Spleen (tissue), 13 donors: ENCODE measurements at regions of chr13 and their contacts with region 1.

Region 1: DNA sequence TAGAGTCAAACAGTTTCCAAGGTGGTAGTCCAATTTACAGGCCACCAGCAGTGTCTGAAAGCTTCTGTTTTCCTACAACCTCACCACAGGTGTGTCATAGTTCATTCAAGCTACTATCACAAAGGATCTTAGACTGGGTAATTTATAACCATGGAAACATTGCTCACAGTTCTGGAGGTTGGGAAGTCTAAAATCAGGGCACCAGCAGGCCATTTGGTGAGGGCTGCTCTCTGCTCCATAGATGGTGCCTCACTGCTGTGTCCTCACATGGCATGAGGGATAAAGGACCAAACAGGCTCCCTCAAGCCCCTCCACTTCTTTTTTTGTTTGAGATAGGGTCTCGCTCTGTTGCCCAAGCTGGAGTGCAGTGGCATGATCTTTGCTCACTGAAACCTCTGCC is 60.6 kb downstream of the ING1 start:
- DNase-seq: no peak
- H3K4me3 ChIP-seq: no peak overlapping the region
- H3K27ac ChIP-seq: no peak overlapping the region
- H3K4me1 ChIP-seq: peaks cover 0 to 12% (median 0%) of the 10 kb centered on the region in 6 donors
- H3K27me3 ChIP-seq: no peaks in the 10 kb centered on the region
- CTCF ChIP-seq: no peak
- POLR2A ChIP-seq: no peak

Region 2: DNA sequence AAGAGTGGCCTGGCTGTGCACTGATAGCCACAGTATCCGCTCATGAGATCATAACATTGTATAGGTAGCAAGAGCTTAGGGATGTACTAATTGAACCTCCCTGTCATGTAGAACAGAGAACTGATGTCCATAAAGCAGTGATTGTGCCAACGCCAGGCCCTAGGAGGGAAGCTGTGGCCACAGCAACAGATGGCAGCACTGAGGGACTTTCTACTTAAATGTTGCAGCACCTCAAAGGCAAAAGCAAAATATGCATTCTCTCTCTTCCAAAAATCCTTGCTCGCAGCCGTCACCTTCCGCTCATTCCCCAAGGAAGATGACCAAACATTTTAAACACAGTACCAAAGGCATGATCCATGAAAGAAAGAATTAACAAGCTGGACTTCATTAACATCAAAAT is 499.4 kb before region 1 on chr13:
- intact Hi-C with region 1: no loop called
- DNase-seq: no peak
- H3K4me3 ChIP-seq: no peak overlapping the region
- H3K27ac ChIP-seq: peak overlapping the region in 4 of 8 donors; percentile 2 to 38 (median 29)
- H3K4me1 ChIP-seq: peaks cover 0 to 48% (median 13%) of the 10 kb centered on the region in 6 donors
- H3K27me3 ChIP-seq: no peaks in the 10 kb centered on the region
- CTCF ChIP-seq: peak in 1 of 11 experiments; percentile 11
- POLR2A ChIP-seq: no peak

Region 3: DNA sequence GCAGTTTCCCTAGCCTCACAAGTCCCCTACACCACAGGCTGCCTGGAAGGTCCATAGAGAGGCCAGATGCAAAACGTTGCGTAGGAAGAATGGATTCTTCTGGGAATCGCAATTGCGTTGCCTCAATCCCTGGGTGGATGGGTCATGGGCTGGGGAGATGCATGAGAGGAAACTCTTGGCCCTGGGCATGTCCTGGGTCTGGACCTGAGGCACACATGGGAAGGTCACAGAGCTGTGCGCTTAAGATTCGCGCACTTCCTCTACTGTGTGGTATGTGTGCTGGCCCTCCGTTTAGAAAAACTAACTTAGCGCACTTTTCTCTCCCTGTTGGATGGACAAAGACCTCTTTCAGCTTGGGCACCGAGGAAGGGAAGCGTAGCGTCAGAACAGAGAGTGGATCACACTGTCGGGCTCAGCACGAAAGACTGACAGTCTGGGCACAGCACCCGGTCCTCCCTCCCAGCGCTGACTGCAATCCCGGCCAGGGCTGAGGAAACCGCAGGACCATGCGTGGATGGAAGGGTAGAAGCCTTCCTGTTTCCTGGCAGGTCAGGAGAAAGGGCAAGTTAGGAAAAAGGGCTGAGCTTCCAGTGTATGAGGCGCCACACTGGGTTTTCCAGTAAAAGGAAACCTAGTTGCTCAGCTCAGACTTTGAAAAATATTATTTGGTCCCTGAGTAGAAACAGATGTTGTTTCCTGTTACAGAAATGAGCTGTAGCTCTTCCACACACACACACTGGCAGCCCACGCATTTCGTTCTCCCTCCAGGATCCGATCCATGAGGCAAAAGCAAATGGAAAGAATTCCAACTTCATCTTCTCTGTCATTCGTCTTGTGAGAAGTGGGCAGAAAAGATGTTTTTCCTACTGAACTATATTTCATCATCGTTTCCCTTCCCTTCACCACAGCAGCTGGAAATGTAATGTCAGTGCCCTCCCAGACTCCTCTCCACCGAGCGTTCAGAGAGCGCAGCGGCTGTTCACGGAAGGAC is 25.5 kb after region 1 on chr13:
- intact Hi-C with region 1: loop called (anchors 2 kb)
- DNase-seq: peak; percentile 77
- H3K4me3 ChIP-seq: peak overlapping the region in 2 of 8 donors; percentile 15 to 30
- H3K27ac ChIP-seq: peak overlapping the region; percentile 59 to 84 (median 78)
- H3K4me1 ChIP-seq: peaks cover 0 to 28% (median 17%) of the 10 kb centered on the region in 6 donors
- H3K27me3 ChIP-seq: peaks cover 0 to 41% (median 0%) of the 10 kb centered on the region in 7 donors
- CTCF ChIP-seq: no peak
- POLR2A ChIP-seq: no peak